ENCODE measurements at regions of chrX and their contacts with region 1.

Region 1: DNA sequence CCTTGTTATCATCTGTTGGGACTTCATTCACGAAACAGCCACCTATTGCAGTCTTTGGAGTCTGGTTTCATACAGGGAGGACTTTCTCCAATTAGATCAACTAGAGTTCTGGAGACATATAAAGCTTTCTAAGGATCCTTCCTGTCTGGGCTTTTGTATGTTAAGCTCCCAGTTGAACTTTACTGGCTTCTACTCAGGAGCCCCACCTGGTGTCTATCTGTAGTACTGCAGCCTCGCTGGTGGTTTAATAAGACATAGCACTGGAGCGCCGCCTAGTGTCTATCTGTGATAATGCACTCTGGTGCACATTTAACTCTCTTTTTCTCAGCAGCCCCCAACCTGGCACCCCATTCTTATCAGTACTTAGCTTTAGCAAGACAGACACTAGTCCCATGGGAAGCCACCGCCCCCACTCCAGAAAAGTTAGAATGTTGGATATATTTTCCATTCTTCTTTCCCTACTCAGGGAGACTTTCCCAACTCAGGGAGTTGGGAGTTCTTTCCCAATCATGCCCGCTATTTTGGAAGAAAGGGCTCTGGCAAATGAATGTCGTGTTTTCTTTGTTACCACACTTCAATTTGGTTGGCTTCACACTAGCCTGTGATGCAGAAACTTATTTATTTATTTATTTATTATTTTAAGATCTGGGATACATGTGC is 36.9 kb upstream of the SYTL4 start:
- H3K4me3 ChIP-seq: no peak overlapping the region
- H3K27ac ChIP-seq: no peak overlapping the region
- H3K4me1 ChIP-seq: no peaks in the 10 kb centered on the region
- CTCF ChIP-seq: peak; percentile 93

Region 2: GRCh38 chrX:100316987-100317386 is 451.8 kb before region 1 on chrX:
- CTCF ChIA-PET with region 1: no interaction called
- POLR2A ChIA-PET with region 1: no interaction called
- H3K4me3 ChIP-seq: no peak overlapping the region
- H3K27ac ChIP-seq: no peak overlapping the region
- H3K4me1 ChIP-seq: no peaks in the 10 kb centered on the region
- CTCF ChIP-seq: no peak

Region 3: GRCh38 chrX:100512471-100512870 is 256.3 kb before region 1 on chrX:
- CTCF ChIA-PET with region 1: interaction called, 22 read pairs
- POLR2A ChIA-PET with region 1: no interaction called
- H3K4me3 ChIP-seq: no peak overlapping the region
- H3K27ac ChIP-seq: no peak overlapping the region
- H3K4me1 ChIP-seq: no peaks in the 10 kb centered on the region
- CTCF ChIP-seq: no peak

Region 4: GRCh38 chrX:100685284-100685996 is 83.4 kb before region 1 on chrX:
- CTCF ChIA-PET with region 1: interaction called, 540 read pairs
- POLR2A ChIA-PET with region 1: interaction called, 3 read pairs
- H3K4me3 ChIP-seq: no peak overlapping the region
- H3K27ac ChIP-seq: no peak overlapping the region
- H3K4me1 ChIP-seq: no peaks in the 10 kb centered on the region
- CTCF ChIP-seq: peak; percentile 91

Region 5: DNA sequence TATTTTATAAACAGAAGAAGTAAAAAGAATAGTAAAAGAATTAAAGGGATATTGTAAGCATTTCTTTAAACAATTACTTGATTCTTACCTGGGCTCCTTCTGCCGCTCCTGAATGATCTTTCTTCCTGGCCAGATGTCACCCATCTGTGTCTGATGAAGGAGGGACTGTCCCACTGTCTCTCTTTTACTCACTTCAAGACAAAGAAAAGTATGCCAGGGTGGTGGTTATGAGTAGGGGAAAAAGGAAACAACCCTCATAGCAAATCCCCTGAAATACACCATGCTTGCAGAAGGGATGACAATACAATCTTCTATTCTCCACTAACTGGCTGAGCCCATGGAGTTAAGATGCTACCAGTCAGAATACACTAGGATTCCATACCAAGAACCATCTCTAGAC is 68.0 kb before region 1 on chrX:
- CTCF ChIA-PET with region 1: interaction called, 24 read pairs
- POLR2A ChIA-PET with region 1: no interaction called
- H3K4me3 ChIP-seq: no peak overlapping the region
- H3K27ac ChIP-seq: no peak overlapping the region
- H3K4me1 ChIP-seq: no peaks in the 10 kb centered on the region
- CTCF ChIP-seq: no peak

Region 6: DNA sequence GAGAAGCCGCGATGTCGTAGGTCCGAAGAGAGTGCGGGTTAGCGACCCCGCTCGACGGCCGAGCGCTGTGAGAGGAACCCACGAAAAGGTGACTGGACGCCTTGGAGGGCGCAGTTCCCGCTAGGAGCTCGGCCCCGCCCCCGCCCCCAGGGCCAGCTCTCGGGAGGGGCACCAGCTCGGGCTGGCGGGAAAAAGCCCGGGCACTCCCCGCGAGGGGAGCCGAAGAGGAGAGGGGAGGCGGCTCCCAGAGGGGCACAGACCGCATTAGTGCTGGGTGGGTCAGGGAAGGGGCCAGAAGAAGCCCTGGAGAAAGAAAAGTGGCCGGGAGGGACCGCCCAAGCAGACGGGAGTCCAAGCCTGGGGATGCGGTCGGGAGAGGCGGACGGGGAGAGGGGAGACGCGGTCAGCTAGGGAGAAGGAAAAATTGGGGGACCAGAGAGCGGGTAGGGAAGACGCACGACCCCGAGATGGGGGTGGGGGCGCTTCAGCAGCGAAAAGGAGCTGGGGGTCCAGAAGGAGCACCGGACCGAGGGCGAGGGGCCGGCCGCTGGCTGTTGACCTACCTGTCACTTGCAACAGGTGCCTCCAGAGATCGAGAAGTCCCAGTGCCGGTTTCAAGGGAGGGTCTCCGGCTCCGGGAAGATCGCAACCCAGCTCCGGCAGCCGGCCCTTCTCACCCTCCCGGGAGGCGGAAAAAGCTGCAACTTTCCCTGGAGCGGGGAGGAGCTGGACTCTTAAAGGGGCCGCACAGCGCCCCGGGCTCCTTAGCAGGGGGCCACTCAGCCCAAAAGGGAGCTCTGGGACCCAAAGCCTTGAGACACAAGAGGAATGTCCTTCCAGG is 37.1 kb before region 1 on chrX and contains the start of gene SYTL4:
- CTCF ChIA-PET with region 1: interaction called, 38 read pairs
- POLR2A ChIA-PET with region 1: no interaction called
- H3K4me3 ChIP-seq: peak within 1 kb of the TSS; percentile 64
- H3K27ac ChIP-seq: peak within 1 kb of the TSS; percentile 63; the same call in 1 of the 2 replicates
- H3K4me1 ChIP-seq: no peaks in the 10 kb centered on the region
- CTCF ChIP-seq: no peak

Region 7: DNA sequence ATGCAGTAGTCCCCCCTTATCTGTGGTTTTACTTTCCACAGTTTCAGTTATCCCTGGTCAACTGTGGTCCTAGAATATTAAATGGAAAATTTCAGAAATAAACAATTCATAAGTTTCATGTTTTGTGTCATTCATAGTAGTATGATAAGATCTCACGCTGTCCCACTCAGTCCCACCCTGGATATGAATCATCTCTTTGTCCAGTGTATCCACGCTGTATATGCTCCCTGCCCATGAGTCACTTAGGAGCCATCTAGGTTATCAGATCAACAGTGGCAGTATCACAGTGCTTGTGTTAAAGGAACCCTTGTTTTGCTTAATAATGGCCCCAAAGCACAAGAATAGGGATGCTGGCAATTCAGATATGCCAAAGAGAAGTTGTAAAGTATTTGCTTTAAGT is 20.7 kb before region 1 on chrX:
- CTCF ChIA-PET with region 1: interaction called, 46 read pairs
- POLR2A ChIA-PET with region 1: no interaction called
- H3K4me3 ChIP-seq: no peak overlapping the region
- H3K27ac ChIP-seq: no peak overlapping the region
- H3K4me1 ChIP-seq: peaks cover 4% of the 10 kb centered on the region; the same call in 1 of the 2 replicates
- CTCF ChIP-seq: no peak

Measured in HEK293 (cell line).